Gastrocnemius medialis (tissue), 4 donors: ENCODE measurements at regions of chr15 and their contacts with region 1.

Region 1: GRCh38 chr15:51443282-51443914 is 101.9 kb downstream of the GLDN start:
- DNase-seq: no peak
- ATAC-seq: no peak
- H3K4me3 ChIP-seq: no peak overlapping the region
- H3K27ac ChIP-seq: no peak overlapping the region
- H3K4me1 ChIP-seq: no peaks in the 10 kb centered on the region
- H3K27me3 ChIP-seq: no peaks in the 10 kb centered on the region
- CTCF ChIP-seq: no peak
- POLR2A ChIP-seq: no peak

Region 2: GRCh38 chr15:49538520-49538919 is 1904.9 kb before region 1 on chr15:
- in situ Hi-C with region 1: no loop called
- intact Hi-C with region 1: loop called (anchors 5 kb)
- DNase-seq: no peak
- ATAC-seq: no peak
- H3K4me3 ChIP-seq: no peak overlapping the region
- H3K27ac ChIP-seq: no peak overlapping the region
- H3K4me1 ChIP-seq: no peaks in the 10 kb centered on the region
- H3K27me3 ChIP-seq: no peaks in the 10 kb centered on the region
- CTCF ChIP-seq: no peak
- POLR2A ChIP-seq: no peak

Region 3: DNA sequence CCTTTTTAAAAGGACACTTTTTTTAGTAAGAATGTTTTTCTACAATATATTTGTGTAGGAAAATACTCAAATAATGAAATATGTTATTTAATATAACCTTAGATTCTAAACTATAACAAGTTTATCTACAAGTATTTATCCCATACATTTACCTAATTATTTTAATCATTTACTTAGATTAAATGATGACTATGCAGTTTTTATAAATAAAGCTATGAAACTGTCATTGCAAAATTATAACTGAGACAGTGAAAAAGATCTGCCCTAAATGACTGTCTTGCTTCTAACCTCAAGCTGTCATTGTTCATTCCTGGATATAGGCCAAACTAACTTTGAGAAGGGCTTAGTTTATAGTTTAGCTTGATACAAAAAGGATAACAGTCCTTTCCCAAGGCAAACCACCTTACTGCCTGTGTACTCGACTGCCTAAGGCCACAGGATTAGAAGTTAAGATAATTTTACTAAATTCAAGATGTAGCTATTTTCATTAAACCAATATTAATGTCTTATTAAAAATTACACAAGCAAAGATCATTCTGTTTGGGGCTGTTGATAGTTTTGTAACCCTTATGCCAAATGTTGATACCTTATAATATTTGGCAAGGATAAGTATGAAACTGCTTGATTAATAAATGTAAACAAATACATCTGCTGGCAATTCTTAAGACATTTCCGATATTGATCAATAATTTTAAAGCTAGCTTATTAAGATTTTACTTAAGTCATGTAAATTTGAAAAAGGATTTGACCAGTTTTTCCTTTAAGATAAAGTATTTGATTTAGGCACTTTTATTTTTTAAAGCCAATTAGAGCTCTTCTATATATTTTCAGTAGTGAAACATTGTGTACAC is 17.7 kb before region 1 on chr15:
- in situ Hi-C with region 1: no loop called
- intact Hi-C with region 1: loop called (anchors 2 kb)
- DNase-seq: no peak
- ATAC-seq: no peak
- H3K4me3 ChIP-seq: no peak overlapping the region
- H3K27ac ChIP-seq: no peak overlapping the region
- H3K4me1 ChIP-seq: no peaks in the 10 kb centered on the region
- H3K27me3 ChIP-seq: no peaks in the 10 kb centered on the region
- CTCF ChIP-seq: no peak
- POLR2A ChIP-seq: no peak